GM23248 (cell line): ENCODE measurements at regions of chr5 and their contacts with region 1.

Region 1: DNA sequence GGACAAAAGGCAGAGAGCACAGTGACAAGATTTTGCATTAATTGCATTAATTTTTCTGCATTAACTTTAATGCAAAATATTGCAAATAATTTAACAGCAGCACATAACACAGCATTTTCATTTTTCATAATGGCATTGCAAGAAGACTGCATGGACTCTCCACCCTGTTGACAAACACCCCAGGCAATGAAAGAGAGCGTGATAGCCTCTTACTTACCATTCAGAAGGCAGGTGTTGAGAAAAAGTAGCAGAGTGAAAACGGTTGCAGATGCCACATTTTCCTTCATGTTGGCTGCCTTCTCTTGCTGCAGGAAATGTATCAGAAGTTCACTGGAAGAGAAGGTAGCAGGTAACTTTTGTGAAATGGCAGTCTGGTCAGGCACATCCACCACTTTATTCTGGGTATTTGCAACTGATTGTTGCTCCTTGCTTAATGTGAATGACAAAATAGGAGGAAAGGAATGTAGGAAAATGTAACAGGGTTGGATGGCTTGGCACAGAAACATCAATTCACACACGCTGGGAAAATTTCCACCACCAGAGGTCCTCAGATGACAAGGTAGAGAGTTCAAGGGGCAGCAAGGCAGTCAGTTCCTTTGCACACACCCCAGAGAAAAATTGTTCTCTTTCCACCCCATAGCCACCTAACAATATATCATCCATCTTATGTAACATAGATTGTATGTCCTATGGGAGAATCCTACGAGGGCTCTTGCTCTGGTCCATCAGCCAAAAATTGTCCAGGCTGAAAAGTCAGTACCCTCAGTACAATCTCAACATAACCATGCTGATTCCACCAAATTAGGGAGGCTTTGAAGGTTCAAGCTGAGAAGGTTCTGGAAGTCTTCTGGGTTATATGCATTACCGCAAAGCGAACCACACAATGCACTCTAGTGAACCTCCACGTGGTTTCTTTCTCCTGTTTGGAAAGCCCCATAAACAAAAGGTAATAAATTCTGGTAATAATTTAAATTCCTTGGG is 41.9 kb upstream of the AGXT2 start:
- DNase-seq: peak; percentile 87
- H3K4me3 ChIP-seq: 0 out of 2 replicates have a peak overlapping the region, but pooled peaks have one; percentile 32
- H3K27ac ChIP-seq: no peak overlapping the region
- H3K4me1 ChIP-seq: peaks cover 19% of the 10 kb centered on the region
- H3K27me3 ChIP-seq: no peaks in the 10 kb centered on the region

Region 2: GRCh38 chr5:35182541-35183535 is 93.2 kb after region 1 on chr5:
- in situ Hi-C with region 1: loop called (anchors 10 kb)
- DNase-seq: peak; percentile 71
- H3K4me3 ChIP-seq: no peak overlapping the region
- H3K27ac ChIP-seq: no peak overlapping the region
- H3K4me1 ChIP-seq: no peaks in the 10 kb centered on the region
- H3K27me3 ChIP-seq: no peaks in the 10 kb centered on the region

Region 3: DNA sequence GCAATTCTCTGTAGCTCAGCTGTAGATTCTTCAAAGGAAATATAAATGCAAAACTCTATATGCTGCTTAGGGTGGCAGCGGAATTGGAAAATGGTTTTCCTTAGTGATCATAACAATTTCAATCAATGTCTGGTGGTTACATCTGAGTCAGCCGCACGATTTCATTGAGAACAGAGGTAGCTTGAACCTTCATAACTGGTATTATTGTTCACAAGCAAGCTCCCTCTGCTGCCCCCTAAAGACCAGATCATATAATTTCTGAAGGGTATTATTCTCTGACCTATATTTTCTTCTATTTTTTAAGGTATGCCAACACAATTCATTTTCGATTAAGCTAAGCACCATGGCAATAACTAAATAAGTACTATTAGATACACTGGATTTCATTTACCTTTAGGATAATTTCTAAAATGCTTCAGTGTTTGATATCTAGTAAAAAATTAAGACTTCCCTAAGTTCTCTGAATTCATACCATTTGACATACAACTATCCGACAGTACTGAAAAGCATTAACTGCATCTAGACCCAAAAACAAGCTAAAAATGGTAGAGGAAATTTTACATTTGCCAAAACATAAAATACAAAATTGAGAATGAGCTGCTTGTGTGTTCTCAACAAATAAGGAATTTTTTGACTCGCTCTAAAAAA is 346.9 kb after region 1 on chr5:
- in situ Hi-C with region 1: loop called (anchors 25 kb)
- DNase-seq: peak; percentile 64
- H3K4me3 ChIP-seq: no peak overlapping the region
- H3K27ac ChIP-seq: no peak overlapping the region
- H3K4me1 ChIP-seq: no peaks in the 10 kb centered on the region
- H3K27me3 ChIP-seq: peaks cover 32% of the 10 kb centered on the region

Region 4: GRCh38 chr5:35644543-35644942 is 554.9 kb after region 1 on chr5:
- in situ Hi-C with region 1: loop called (anchors 25 kb)
- DNase-seq: no peak
- H3K4me3 ChIP-seq: no peak overlapping the region
- H3K27ac ChIP-seq: no peak overlapping the region
- H3K4me1 ChIP-seq: no peaks in the 10 kb centered on the region
- H3K27me3 ChIP-seq: no peaks in the 10 kb centered on the region

Region 5: DNA sequence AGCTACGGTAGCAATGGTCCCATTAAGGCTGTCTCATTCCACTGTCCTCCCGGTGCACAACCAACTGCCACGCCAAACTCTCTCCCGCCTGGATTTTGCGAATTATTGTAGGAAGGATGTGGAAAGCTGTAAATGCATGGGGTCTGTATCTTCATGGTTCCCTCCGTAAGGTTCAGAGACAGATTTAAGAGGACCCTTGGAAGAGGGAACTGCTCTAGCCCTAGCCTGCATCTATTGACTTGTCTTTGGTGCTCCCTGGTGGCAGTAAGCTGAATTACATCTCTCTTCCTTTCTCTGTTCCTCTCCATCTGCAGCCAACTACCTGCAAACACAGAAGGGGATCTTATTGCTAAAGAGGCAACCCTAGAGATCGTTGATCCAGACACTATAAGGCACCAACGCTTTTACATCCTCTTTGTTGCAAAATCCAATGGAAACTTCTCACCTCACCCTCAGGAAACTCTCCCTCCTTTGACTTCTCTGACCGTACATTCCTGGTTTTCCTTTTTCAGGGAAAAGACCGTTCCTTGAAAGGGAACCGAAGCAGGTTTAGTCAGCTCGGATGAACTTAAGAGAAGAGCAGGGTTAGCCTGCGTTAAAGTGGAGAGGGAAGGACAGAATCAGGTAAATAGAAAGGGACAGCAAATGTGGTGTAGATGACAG is 836.9 kb after region 1 on chr5:
- in situ Hi-C with region 1: loop called (anchors 10 kb)
- DNase-seq: peak; percentile 59
- H3K4me3 ChIP-seq: peak overlapping the region; percentile 44
- H3K27ac ChIP-seq: no peak overlapping the region
- H3K4me1 ChIP-seq: peaks cover 23% of the 10 kb centered on the region
- H3K27me3 ChIP-seq: peaks cover 27% of the 10 kb centered on the region